ENCODE measurements at regions of chr2 and their contacts with region 1.

Region 1: DNA sequence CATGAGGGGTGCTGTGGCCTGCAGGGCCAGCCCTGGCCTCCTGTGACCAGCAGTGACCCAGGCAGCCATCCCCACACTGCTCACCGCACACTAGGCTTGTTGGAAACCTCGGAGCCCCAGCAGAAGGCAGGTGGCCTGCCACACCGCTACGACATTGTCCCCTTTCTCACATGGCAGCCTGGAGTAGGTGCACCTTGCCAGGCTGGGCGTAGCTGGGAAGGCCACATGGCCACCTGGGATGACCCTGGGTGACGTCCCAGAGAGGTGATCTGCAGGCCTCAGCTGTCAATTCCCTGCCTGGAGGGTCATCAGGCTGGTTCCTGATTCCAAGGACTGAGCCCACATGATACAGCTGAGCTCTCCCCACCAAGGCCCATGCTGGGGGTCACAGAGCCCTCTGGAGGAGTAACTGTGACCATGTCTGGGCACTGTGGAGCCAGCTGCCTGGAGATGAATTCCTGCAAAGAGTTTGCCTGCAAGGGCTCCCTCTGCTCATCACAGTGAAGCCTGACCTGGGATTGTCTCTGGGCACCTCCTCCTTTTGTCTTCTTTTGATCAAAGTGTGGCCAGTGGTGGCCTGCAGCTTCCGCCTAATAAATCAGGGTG is 119.6 kb upstream of the OTOS start:
- DNase-seq: no peak
- H3K4me3 ChIP-seq: no peak overlapping the region
- H3K27ac ChIP-seq: no peak overlapping the region
- H3K4me1 ChIP-seq: peaks cover 18% of the 10 kb centered on the region
- H3K27me3 ChIP-seq: no peaks in the 10 kb centered on the region
- CTCF ChIP-seq: no peak

Region 2: GRCh38 chr2:240298803-240299709 is 39.0 kb after region 1 on chr2:
- CTCF ChIA-PET with region 1: no interaction called
- dilution Hi-C with region 1: loop called (anchors 5 kb)
- in situ Hi-C with region 1: no loop called
- intact Hi-C with region 1: no loop called
- DNase-seq: no peak
- H3K4me3 ChIP-seq: no peak overlapping the region
- H3K27ac ChIP-seq: no peak overlapping the region
- H3K4me1 ChIP-seq: no peaks in the 10 kb centered on the region
- H3K27me3 ChIP-seq: no peaks in the 10 kb centered on the region
- CTCF ChIP-seq: peak in 1 of 2 donors; percentile 7

Measured in mammary epithelial cell (primary cell).